GM12878 (cell line): ENCODE measurements at regions of chr1 and their contacts with region 1.

Region 1: DNA sequence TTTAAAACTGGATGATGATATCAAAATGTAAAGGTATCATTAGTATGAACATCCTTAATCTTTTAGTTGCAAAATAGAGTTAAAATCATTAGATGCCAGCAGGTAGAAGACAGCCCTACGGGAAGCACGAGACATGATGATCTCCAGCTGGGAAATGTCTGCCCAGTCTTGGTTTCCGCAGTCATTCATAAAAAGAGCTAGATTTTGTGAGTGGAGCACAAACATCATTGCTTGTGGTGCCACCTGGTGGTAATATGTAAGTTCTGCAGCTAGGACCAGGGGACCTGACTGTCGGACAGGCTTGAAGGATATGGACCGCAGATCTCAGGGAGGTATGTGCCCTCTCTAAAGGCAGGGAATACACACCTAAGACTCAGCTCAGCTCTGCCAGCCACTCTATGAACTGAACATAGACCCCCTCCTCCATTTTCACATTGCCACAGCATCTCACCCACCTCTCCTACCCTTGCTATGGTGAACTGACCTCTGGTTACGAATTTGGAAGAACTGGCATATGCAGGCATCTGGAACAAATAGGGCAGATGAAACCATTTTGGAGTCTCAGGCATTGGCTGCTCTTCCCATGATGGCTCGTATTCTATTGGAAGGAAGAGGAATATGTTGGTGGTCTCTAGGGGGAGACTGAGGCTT is 9.2 kb downstream of the FCMR start:
- DNase-seq: no peak
- ATAC-seq: peak; percentile 78
- H3K4me3 ChIP-seq: no peak overlapping the region
- H3K27ac ChIP-seq: no peak overlapping the region
- H3K4me1 ChIP-seq: peaks cover 38% of the 10 kb centered on the region
- H3K27me3 ChIP-seq: no peaks in the 10 kb centered on the region
- CTCF ChIP-seq: peak; percentile 71 to 90 (median 77); a peak in 5 of 6 replicates
- EP300 ChIP-seq: no peak
- POLR2A ChIP-seq: peak; percentile 40; the same call in 1 of the 2 replicates
- RAD21 ChIP-seq: peak; percentile 76

Region 2: DNA sequence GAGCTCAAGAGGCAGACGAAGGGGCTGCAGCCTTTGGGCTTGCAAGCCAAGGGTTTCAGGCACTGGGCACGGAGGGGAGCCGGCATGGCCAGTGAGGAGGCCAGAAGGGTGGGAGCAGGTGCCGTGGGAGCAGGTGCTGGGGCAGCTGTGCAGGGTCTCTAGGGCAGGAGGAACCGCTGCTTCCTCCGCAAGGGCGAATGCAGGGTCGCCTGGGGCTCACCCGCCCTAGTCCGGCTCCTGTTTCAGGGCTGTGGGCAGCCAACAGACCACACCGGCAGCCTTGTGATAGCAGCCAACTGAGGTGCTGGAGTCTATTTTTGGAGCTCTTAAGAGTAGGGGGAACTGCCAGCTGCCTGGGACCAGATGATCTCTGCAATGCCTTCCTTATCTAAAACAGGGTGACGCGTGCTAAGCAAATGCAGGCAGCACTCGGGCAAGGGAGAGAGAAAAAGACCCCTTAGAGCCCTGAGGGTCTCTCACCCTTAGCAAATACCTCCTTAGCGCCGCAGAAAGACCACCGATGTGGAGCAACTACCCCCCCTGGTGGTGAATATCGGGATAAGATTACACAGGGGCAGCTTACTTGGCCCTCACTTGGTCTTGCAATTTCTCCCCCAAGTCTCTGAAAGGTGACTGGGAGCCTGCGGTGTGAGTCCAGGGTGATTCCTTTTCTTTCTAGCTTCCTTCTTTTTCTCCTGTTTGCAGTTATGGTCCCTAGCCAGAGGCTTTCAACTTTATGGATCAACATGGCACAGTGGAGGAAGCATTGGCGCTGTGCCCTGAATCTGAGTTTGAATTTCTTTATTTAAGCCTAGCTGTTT is 248.5 kb before region 1 on chr1:
- CTCF ChIA-PET with region 1: interaction called, 20 read pairs
- POLR2A ChIA-PET with region 1: no interaction called
- RAD21 ChIA-PET with region 1: interaction called, 9 read pairs
- SMC1A ChIA-PET with region 1: interaction called, 15 read pairs
- in situ Hi-C with region 1: no loop called
- intact Hi-C with region 1: no loop called
- DNase-seq: no peak
- ATAC-seq: peak; percentile 94
- H3K4me3 ChIP-seq: peak overlapping the region; percentile 44; the same call in 1 of the 2 replicates
- H3K27ac ChIP-seq: no peak overlapping the region
- H3K4me1 ChIP-seq: peaks cover 10% of the 10 kb centered on the region
- H3K27me3 ChIP-seq: no peaks in the 10 kb centered on the region
- CTCF ChIP-seq: peak; percentile 81 to 85 (median 84)
- EP300 ChIP-seq: no peak
- POLR2A ChIP-seq: no peak
- RAD21 ChIP-seq: peak; percentile 89

Region 3: GRCh38 chr1:206753141-206753540 is 159.4 kb before region 1 on chr1:
- CTCF ChIA-PET with region 1: no interaction called
- POLR2A ChIA-PET with region 1: no interaction called
- RAD21 ChIA-PET with region 1: no interaction called
- SMC1A ChIA-PET with region 1: no interaction called
- in situ Hi-C with region 1: no loop called
- intact Hi-C with region 1: no loop called
- DNase-seq: no peak
- ATAC-seq: no peak
- H3K4me3 ChIP-seq: no peak overlapping the region
- H3K27ac ChIP-seq: no peak overlapping the region
- H3K4me1 ChIP-seq: no peaks in the 10 kb centered on the region
- H3K27me3 ChIP-seq: no peaks in the 10 kb centered on the region
- CTCF ChIP-seq: no peak
- EP300 ChIP-seq: no peak
- POLR2A ChIP-seq: no peak
- RAD21 ChIP-seq: no peak

Region 4: GRCh38 chr1:206803221-206803730 is 109.3 kb before region 1 on chr1:
- CTCF ChIA-PET with region 1: interaction called, 137 read pairs
- POLR2A ChIA-PET with region 1: no interaction called
- RAD21 ChIA-PET with region 1: interaction called, 4 read pairs
- SMC1A ChIA-PET with region 1: interaction called, 64 read pairs
- in situ Hi-C with region 1: no loop called
- intact Hi-C with region 1: no loop called
- DNase-seq: peak; percentile 98
- ATAC-seq: peak; percentile 97
- H3K4me3 ChIP-seq: no peak overlapping the region
- H3K27ac ChIP-seq: peak overlapping the region; percentile 55
- H3K4me1 ChIP-seq: peaks cover 20% of the 10 kb centered on the region
- H3K27me3 ChIP-seq: no peaks in the 10 kb centered on the region
- CTCF ChIP-seq: no peak
- EP300 ChIP-seq: peak; percentile 98 to 99
- POLR2A ChIP-seq: peak; percentile 26; the same call in 1 of the 2 replicates
- RAD21 ChIP-seq: peak; percentile 9; the same call in 1 of the 2 replicates

Region 5: DNA sequence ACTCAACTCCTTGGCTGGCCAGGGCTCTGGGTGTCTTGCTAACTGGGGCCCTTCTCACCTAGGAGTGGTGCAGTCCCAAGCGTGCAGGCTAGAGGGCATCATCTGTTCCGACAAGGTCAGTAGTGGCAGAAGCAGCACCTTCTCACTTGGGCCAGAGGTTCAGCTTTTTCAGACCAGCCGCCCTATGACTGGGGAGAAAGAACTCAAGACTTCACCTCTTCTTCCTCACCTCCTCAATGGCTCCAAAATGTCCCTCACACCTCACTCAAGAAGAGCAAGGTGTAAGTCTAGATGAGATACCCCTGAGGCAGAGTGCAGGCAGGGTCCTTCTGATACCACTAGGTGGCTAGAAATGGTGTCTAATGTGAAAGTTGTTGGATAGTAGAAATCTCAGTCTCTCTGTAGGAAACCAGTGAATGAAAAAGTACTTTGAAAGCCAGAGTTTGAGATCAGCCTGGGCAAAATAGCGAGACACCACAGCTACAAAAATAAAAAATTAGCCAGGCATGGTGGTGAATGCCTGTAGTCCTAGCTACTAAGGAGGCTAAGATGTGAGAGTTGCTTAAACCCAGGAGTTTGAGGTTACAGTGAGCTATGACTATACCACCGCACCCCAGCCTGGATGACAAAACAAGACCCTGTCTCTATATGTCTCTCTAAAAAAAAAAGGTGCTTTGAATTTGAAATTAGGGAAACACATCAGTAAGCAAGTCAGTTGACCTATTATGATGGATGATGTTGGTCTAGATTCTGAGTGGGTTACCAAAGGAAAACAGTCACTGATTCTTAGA is 55.7 kb before region 1 on chr1:
- CTCF ChIA-PET with region 1: interaction called, 37 read pairs
- POLR2A ChIA-PET with region 1: interaction called, 5 read pairs
- RAD21 ChIA-PET with region 1: interaction called, 5 read pairs
- SMC1A ChIA-PET with region 1: interaction called, 4 read pairs
- in situ Hi-C with region 1: no loop called
- intact Hi-C with region 1: no loop called
- DNase-seq: no peak
- ATAC-seq: peak; percentile 82
- H3K4me3 ChIP-seq: no peak overlapping the region
- H3K27ac ChIP-seq: no peak overlapping the region
- H3K4me1 ChIP-seq: no peaks in the 10 kb centered on the region
- H3K27me3 ChIP-seq: no peaks in the 10 kb centered on the region; a peak in 1 of 4 replicates
- CTCF ChIP-seq: peak; percentile 10 to 61 (median 38); a peak in 4 of 6 replicates
- EP300 ChIP-seq: no peak
- POLR2A ChIP-seq: no peak
- RAD21 ChIP-seq: 0 out of 2 replicates have a peak, but pooled peaks have one; percentile 21

Region 6: DNA sequence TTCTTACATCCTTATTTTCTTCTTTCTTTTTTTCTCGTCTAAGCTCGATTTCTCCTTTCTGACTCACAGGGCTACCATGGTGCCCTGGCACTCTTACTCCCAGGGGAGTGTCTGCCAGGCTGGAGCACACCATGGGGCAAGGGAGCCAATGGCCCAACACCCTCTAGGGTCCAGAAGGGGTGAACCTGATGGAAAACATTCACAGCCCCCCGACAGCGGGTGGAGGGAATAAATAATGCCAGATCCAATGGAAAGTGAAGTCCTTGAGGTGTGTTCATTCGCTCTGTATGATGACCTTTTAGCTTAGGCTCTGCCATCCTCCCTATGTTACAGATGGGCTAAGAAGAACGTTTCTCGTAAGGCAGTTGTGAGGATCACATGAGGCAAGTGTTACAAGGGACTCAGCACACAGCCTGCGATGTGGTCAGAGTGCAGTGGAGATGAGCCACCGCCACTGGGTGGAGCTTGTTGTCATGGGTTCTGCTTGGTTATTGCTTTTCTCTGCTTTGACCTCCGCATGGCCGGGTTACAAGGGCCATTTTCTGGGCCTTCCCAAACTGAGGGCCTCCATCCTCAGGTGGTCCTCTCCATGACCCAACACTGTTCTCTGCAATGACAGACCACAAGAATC is 12.7 kb after region 1 on chr1:
- CTCF ChIA-PET with region 1: interaction called, 643 read pairs
- POLR2A ChIA-PET with region 1: interaction called, 222 read pairs
- RAD21 ChIA-PET with region 1: interaction called, 371 read pairs
- SMC1A ChIA-PET with region 1: interaction called, 431 read pairs
- in situ Hi-C with region 1: no loop called
- intact Hi-C with region 1: loop called (anchors 1 kb)
- DNase-seq: peak; percentile 91
- ATAC-seq: peak; percentile 72
- H3K4me3 ChIP-seq: no peak overlapping the region; the same call in 1 of the 2 replicates
- H3K27ac ChIP-seq: peak overlapping the region; percentile 99
- H3K4me1 ChIP-seq: peaks cover 51% of the 10 kb centered on the region
- H3K27me3 ChIP-seq: no peaks in the 10 kb centered on the region
- CTCF ChIP-seq: peak in 1 of 3 experiments; percentile 29; a peak in 1 of 6 replicates
- EP300 ChIP-seq: no peak; a peak in 1 of 4 replicates
- POLR2A ChIP-seq: no peak
- RAD21 ChIP-seq: peak; percentile 56

Region 7: DNA sequence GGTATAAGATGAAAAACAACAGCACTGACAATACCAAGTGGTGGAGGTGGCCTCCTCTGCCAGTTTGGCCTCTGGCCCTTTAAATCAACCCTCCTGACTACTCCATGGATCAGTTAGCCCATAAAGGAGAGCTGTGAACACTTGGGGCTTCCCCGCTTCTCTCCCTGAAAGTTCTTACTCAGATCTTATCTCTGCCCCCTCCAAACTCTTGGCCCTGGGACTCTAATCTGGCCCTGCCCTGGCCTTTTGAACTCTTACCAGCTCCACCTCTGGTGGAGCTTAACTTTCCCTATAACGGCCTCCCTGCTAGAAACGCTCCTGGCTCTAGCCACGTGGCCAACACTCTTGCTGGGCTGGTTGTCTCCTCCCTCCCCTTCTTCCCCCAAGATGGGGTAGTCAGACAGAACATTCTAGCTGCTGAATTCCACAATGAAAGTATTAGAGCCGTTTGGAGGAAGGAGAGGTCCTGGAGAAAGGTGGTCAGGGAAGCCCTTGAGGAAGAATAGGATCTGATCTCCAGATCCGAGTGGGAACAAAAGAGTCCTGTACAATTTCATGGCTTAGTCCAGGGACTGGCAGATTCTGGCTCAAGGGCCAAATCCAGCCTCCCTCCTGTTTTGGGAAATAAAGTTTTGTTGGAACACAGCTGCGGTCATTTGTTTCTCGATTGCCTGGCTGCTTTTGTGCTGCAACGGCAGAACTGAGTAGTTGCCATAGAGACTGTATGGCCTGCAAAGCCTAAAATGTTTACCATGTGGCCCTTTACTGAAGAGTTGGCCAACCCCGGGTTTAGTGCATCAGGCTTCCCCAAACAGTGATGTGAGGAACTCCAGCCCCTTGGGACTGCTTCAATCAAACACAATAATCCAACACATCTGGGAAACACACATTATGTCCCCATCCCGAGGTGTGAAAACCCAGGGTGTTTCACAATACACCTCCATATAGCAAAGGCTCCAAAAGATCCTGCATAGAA is 43.2 kb after region 1 on chr1:
- CTCF ChIA-PET with region 1: interaction called, 17 read pairs
- POLR2A ChIA-PET with region 1: no interaction called
- RAD21 ChIA-PET with region 1: interaction called, 6 read pairs
- SMC1A ChIA-PET with region 1: interaction called, 5 read pairs
- in situ Hi-C with region 1: no loop called
- intact Hi-C with region 1: no loop called
- DNase-seq: no peak
- ATAC-seq: peak; percentile 78
- H3K4me3 ChIP-seq: no peak overlapping the region
- H3K27ac ChIP-seq: peak overlapping the region; percentile 38
- H3K4me1 ChIP-seq: peaks cover 44% of the 10 kb centered on the region
- H3K27me3 ChIP-seq: no peaks in the 10 kb centered on the region
- CTCF ChIP-seq: no peak
- EP300 ChIP-seq: no peak
- POLR2A ChIP-seq: no peak
- RAD21 ChIP-seq: 0 out of 2 replicates have a peak, but pooled peaks have one; percentile 2

Region 8: DNA sequence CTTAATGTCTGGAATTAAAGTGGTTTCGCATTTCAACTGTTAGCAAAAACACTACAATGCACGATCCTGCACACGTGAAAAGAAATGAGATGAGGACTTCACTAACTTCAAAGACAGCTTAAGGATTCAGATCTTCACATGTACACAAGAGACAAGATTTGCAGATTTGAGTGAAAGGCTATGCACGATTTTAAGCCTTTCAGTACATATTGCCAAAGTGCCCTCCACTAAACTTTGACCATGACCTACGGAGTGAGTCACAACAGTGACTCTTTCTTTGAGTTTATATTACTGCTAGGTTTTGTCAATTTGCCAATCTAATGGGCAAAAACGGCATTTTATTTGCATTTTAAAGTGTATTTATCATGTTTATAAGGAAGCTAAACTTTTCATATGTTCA is 691.2 kb after region 1 on chr1:
- CTCF ChIA-PET with region 1: no interaction called
- POLR2A ChIA-PET with region 1: no interaction called
- RAD21 ChIA-PET with region 1: no interaction called
- SMC1A ChIA-PET with region 1: no interaction called
- in situ Hi-C with region 1: no loop called
- intact Hi-C with region 1: no loop called
- DNase-seq: no peak
- ATAC-seq: no peak
- H3K4me3 ChIP-seq: no peak overlapping the region
- H3K27ac ChIP-seq: no peak overlapping the region
- H3K4me1 ChIP-seq: no peaks in the 10 kb centered on the region
- H3K27me3 ChIP-seq: no peaks in the 10 kb centered on the region
- CTCF ChIP-seq: no peak
- EP300 ChIP-seq: no peak
- POLR2A ChIP-seq: no peak
- RAD21 ChIP-seq: no peak